Spleen (tissue), 13 donors: ENCODE measurements at regions of chr4 and their contacts with region 1.

Region 1: GRCh38 chr4:69697536-69698242 is 44.6 kb upstream of the UGT2A1 start:
- DNase-seq: no peak
- H3K4me3 ChIP-seq: no peak overlapping the region
- H3K27ac ChIP-seq: no peak overlapping the region
- H3K4me1 ChIP-seq: no peaks in the 10 kb centered on the region
- H3K27me3 ChIP-seq: no peaks in the 10 kb centered on the region
- CTCF ChIP-seq: no peak
- POLR2A ChIP-seq: no peak

Region 2: GRCh38 chr4:69126024-69126423 is 571.7 kb before region 1 on chr4:
- intact Hi-C with region 1: no loop called
- DNase-seq: no peak
- H3K4me3 ChIP-seq: no peak overlapping the region
- H3K27ac ChIP-seq: no peak overlapping the region
- H3K4me1 ChIP-seq: no peaks in the 10 kb centered on the region
- H3K27me3 ChIP-seq: no peaks in the 10 kb centered on the region
- CTCF ChIP-seq: no peak
- POLR2A ChIP-seq: no peak

Region 3: DNA sequence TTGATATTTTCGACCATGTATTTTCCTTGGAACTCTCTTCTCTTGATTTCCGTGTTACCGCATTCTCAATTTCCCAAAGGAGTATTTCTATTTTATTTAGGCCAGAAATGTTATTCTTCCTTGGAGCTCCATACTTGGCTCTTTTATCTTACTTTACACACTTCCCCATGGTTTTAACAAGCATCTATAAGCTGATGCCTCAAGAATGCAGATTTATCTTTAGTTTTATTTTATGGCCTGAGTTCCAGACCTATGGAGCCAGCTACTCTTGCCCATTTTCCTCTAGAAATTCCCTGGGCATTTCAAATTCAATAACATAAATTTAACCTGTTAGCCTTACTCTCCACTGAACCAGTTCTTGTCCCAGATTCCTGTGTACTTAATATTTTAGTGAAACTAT is 118.5 kb after region 1 on chr4:
- intact Hi-C with region 1: loop called (anchors 10 kb)
- DNase-seq: no peak
- H3K4me3 ChIP-seq: no peak overlapping the region
- H3K27ac ChIP-seq: no peak overlapping the region
- H3K4me1 ChIP-seq: no peaks in the 10 kb centered on the region
- H3K27me3 ChIP-seq: no peaks in the 10 kb centered on the region
- CTCF ChIP-seq: no peak
- POLR2A ChIP-seq: no peak